MCF 10A (cell line): ENCODE measurements at regions of chr12 and their contacts with region 1.

Region 1: DNA sequence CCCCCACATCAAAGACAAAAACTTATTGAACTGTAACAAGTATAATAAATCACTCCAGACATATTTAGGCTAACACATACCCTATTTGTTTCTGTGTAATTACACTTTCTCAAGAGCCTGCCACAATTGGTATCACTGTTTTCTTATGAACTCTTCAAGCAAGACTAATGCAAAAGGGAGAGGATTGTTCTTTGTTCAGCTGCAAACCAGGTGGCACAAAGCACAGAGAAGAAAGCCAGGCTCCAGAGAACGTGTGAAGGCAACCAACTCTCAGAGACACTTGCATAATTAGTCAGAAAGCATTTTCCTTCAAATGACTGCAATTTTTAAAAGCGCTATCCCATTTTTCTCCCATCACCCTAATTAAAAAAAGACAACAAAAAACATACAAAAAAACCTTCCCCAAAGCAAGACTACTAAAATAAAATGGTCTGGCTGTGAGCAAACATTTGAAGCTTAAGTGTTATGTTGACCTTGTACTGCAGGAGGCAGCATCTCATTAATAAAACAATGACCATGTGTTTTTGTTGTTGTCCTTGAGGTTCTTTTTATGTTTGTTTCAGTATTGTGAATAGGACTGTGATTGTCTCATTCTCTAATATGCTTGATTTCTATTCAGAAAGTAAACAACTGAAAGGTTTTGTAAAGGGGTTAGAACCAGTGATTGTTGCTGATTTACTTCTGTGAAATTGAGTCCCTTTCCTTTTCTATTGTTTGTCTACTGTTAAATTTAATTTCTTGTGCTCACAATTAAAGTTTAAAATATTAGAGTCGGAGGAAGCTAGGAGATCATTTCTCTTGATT is 452.7 kb upstream of the PDE3A start:
- DNase-seq: peak; percentile 33
- H3K4me3 Mint-ChIP-seq: no peak overlapping the region
- H3K27ac Mint-ChIP-seq: no peak overlapping the region
- H3K4me1 Mint-ChIP-seq: no peaks in the 10 kb centered on the region
- H3K27me3 Mint-ChIP-seq: peaks cover 83% of the 10 kb centered on the region
- CTCF ChIP-seq: peak; percentile 71

Region 2: GRCh38 chr12:20125276-20125798 is 209.7 kb after region 1 on chr12:
- CTCF ChIA-PET with region 1: interaction called, 14 read pairs
- POLR2A ChIA-PET with region 1: no interaction called
- intact Hi-C with region 1: no loop called
- DNase-seq: no peak
- H3K4me3 Mint-ChIP-seq: no peak overlapping the region
- H3K27ac Mint-ChIP-seq: no peak overlapping the region
- H3K4me1 Mint-ChIP-seq: no peaks in the 10 kb centered on the region
- H3K27me3 Mint-ChIP-seq: peaks cover 75% of the 10 kb centered on the region
- CTCF ChIP-seq: no peak

Region 3: DNA sequence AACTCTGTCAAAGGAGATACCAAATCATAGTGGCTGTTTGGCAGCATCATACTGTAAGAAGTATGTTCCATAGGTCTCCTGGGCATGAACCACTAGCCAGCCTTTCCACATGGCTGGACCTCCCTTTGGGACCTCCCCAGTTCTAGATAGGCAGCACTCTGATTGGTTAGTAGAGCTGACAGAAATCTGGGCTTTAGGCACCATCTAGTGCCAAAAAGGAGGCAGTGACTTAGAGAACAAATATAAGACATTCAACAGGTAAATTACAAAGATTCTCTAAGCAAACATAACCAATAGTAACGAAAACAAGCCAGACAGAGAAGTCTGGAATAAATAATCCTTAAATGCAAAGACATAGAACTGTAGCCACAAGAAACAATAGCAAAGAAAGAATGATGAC is 304.7 kb after region 1 on chr12:
- CTCF ChIA-PET with region 1: interaction called, 30 read pairs
- POLR2A ChIA-PET with region 1: interaction called, 3 read pairs
- intact Hi-C with region 1: loop called (anchors 1 kb)
- DNase-seq: peak; percentile 61
- H3K4me3 Mint-ChIP-seq: no peak overlapping the region
- H3K27ac Mint-ChIP-seq: no peak overlapping the region
- H3K4me1 Mint-ChIP-seq: no peaks in the 10 kb centered on the region
- H3K27me3 Mint-ChIP-seq: peaks cover 32% of the 10 kb centered on the region
- CTCF ChIP-seq: peak; percentile 25

Region 4: GRCh38 chr12:20289512-20289911 is 373.9 kb after region 1 on chr12:
- CTCF ChIA-PET with region 1: no interaction called
- POLR2A ChIA-PET with region 1: no interaction called
- intact Hi-C with region 1: no loop called
- DNase-seq: no peak
- H3K4me3 Mint-ChIP-seq: no peak overlapping the region
- H3K27ac Mint-ChIP-seq: no peak overlapping the region
- H3K4me1 Mint-ChIP-seq: no peaks in the 10 kb centered on the region
- H3K27me3 Mint-ChIP-seq: peaks cover 4% of the 10 kb centered on the region
- CTCF ChIP-seq: no peak

Region 5: DNA sequence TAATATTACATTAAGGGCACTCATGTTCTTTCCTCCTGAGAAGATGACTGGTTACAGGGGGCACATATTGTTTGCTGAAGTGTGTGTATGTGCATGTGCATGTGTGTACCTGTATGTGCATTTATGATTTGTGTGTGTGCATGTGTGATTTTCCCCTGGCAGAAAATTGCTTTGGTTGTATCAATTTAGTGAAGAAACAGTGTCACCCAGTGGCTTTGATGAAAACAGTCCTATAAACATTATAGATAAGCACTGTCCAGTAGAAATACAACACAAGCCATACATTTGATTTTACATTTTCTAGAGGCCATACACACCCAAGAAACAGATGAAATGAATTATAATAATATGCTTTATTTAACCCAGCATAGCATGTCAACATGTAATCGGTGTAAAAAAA is 461.4 kb after region 1 on chr12:
- CTCF ChIA-PET with region 1: interaction called, 5 read pairs
- POLR2A ChIA-PET with region 1: no interaction called
- intact Hi-C with region 1: loop called (anchors 1 kb)
- DNase-seq: peak; percentile 28
- H3K4me3 Mint-ChIP-seq: no peak overlapping the region
- H3K27ac Mint-ChIP-seq: no peak overlapping the region
- H3K4me1 Mint-ChIP-seq: no peaks in the 10 kb centered on the region
- H3K27me3 Mint-ChIP-seq: peaks cover 81% of the 10 kb centered on the region
- CTCF ChIP-seq: peak; percentile 27

Region 6: GRCh38 chr12:20549107-20549719 is 633.6 kb after region 1 on chr12:
- CTCF ChIA-PET with region 1: no interaction called
- POLR2A ChIA-PET with region 1: no interaction called
- intact Hi-C with region 1: loop called (anchors 1 kb)
- DNase-seq: peak; percentile 53
- H3K4me3 Mint-ChIP-seq: no peak overlapping the region
- H3K27ac Mint-ChIP-seq: no peak overlapping the region
- H3K4me1 Mint-ChIP-seq: no peaks in the 10 kb centered on the region
- H3K27me3 Mint-ChIP-seq: peaks cover 47% of the 10 kb centered on the region
- CTCF ChIP-seq: peak; percentile 45

Region 7: GRCh38 chr12:20601668-20602280 is 686.2 kb after region 1 on chr12:
- CTCF ChIA-PET with region 1: interaction called, 7 read pairs
- POLR2A ChIA-PET with region 1: no interaction called
- intact Hi-C with region 1: loop called (anchors 1 kb)
- DNase-seq: peak; percentile 30
- H3K4me3 Mint-ChIP-seq: no peak overlapping the region
- H3K27ac Mint-ChIP-seq: no peak overlapping the region
- H3K4me1 Mint-ChIP-seq: no peaks in the 10 kb centered on the region
- H3K27me3 Mint-ChIP-seq: peaks cover 36% of the 10 kb centered on the region
- CTCF ChIP-seq: peak; percentile 29